Ovary (tissue), 10 donors: ENCODE measurements at regions of chr6 and their contacts with region 1.

Region 1: DNA sequence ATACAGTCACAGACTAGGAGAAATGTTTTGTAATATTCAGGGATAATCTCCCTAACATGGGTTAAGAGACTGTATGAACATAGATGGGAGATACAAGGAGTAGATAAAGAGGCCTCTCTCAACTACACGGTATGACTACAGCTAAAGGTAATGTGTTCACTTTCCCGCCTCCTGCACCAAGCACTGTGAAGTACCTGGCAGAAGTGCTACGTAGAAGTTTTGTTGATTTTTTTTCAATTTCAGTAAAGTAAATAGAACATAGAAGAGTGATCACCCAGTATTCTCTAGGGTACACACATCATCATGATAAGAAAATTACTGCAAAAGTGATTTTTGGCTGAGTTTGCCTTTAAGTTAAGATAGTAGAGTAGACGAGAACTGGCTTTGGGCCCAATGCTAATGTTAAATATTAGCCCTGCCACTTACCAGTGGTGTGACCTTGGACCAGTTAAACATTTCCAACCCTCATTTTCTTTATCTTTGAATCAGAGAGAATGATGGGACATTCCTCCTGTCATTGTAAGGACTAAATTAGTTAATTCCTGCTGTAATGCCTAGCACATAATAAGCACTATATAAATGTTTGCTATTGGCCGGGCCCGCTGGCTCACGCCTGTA is 183.6 kb downstream of the COL9A1 start:
- DNase-seq: no peak
- H3K4me3 ChIP-seq: no peak overlapping the region
- H3K27ac ChIP-seq: no peak overlapping the region
- H3K4me1 ChIP-seq: no peaks in the 10 kb centered on the region
- H3K27me3 ChIP-seq: no peaks in the 10 kb centered on the region
- CTCF ChIP-seq: no peak
- EP300 ChIP-seq: no peak
- POLR2A ChIP-seq: no peak

Region 2: DNA sequence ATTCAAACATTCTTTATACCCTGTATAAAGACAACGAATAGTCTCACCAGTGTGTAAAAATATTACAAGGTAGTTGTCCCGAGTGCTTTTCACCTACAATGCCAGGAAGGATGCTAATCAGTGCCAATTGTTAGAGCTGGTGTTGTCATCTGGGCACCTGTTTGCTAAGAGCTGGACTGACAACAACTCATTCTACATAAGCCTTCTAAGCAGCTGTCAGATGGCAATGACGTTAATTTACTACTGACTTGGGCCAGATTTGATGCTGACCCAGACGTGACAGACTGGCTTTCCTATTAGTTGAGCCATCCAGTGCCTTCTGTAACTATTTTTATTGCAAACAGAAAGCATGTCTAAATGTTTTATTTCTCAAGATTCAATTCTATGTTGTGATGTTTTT is 1129.0 kb before region 1 on chr6:
- intact Hi-C with region 1: loop called in 1 of 4 experiments (anchors 5 kb)
- DNase-seq: no peak
- H3K4me3 ChIP-seq: no peak overlapping the region
- H3K27ac ChIP-seq: no peak overlapping the region
- H3K4me1 ChIP-seq: no peaks in the 10 kb centered on the region
- H3K27me3 ChIP-seq: no peaks in the 10 kb centered on the region
- CTCF ChIP-seq: no peak
- EP300 ChIP-seq: no peak
- POLR2A ChIP-seq: no peak